Activated CD8-positive, alpha-beta T cell treated with anti-CD3 and anti-CD28 coated beads, Interleukin-2, amount 10 ng/mL, durations not matched to agents 7 days and 5 days (primary cell): ENCODE measurements at regions of chr9 and their contacts with region 1.

Region 1: GRCh38 chr9:89701221-89701798 is 96.5 kb downstream of the GADD45G start:
- DNase-seq: peak; percentile 80
- ATAC-seq: peak; percentile 89
- H3K4me3 Mint-ChIP-seq: peak overlapping the region; percentile 70
- H3K27ac Mint-ChIP-seq: peak overlapping the region; percentile 90
- H3K4me1 Mint-ChIP-seq: peaks cover 81% of the 10 kb centered on the region
- H3K27me3 Mint-ChIP-seq: no peaks in the 10 kb centered on the region

Region 2: DNA sequence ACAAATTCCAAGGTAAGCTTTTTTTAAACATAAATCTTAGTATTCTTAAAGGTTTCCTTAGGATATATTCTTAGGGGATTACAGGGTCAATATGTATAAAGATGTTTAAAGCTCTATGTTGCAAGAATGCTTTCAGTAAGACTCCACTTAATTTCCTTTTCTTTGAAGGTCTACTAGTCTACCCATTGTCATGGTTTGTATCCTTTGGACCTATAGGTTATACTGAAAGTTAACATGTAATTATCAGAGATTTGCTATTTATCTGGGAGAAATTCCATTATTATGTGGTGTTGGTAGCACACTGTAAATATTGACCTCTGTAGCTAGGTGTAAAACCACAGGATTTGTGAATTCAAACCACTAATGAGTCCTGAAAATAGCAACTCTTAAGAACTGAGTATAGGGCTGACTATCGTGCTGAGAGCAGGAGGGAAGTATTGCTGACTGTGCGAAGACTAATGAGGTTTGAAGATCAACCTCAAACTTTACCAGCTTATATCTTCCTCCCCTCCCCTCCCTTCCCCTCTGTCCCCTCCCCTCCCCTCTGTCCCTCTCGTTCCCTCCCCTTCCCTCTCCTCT is 10.9 kb before region 1 on chr9:
- CTCF ChIA-PET with region 1: interaction called, 4 read pairs
- POLR2A ChIA-PET with region 1: interaction called, 17 read pairs
- DNase-seq: no peak
- ATAC-seq: peak; percentile 79
- H3K4me3 Mint-ChIP-seq: no peak overlapping the region
- H3K27ac Mint-ChIP-seq: peak overlapping the region; percentile 66
- H3K4me1 Mint-ChIP-seq: peaks cover 39% of the 10 kb centered on the region
- H3K27me3 Mint-ChIP-seq: peaks cover 7% of the 10 kb centered on the region

Region 3: DNA sequence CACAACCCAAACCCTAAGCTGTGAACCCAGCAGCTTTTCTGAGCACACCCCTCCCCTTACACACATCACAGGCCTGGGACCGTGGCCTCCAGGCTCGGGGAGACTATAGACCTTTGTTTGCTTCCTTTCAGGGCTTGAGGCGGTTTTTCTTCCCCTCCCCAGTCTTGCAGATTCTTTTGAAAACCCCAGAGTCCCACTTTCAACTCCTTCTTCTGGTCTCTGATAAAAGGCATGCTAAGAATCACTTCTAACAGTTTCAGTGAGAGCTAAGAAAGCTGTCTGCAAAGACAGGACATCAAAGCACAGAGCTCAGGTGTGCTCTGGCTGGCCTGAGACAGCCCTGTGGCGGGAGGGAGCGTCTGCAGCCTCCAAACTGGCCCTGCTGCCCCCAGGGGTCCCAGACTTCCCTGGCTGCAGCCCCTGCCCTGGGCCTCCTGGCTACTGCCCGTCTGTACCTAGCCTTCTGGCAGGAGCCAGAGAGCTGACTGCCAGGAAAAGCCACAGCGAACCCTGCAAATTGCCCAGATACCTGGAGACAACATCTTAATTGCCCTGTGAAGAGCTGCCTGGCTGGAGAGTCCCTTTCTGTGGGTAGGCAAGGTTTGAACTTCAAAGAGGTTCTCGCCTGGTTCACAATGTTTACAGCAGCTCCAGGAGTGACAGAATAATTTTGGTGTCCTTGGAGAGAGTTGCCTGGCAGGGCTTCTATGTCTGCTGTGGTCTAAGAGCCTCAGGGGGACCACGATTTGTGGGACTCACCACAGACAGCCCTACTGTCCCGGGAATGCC is 42.5 kb after region 1 on chr9:
- CTCF ChIA-PET with region 1: interaction called, 46 read pairs
- POLR2A ChIA-PET with region 1: interaction called, 50 read pairs
- DNase-seq: peak; percentile 91
- ATAC-seq: peak; percentile 86
- H3K4me3 Mint-ChIP-seq: peak overlapping the region; percentile 67
- H3K27ac Mint-ChIP-seq: peak overlapping the region; percentile 92
- H3K4me1 Mint-ChIP-seq: peaks cover 91% of the 10 kb centered on the region
- H3K27me3 Mint-ChIP-seq: no peaks in the 10 kb centered on the region